ENCODE measurements at regions of chr13 and their contacts with region 1.

Region 1: DNA sequence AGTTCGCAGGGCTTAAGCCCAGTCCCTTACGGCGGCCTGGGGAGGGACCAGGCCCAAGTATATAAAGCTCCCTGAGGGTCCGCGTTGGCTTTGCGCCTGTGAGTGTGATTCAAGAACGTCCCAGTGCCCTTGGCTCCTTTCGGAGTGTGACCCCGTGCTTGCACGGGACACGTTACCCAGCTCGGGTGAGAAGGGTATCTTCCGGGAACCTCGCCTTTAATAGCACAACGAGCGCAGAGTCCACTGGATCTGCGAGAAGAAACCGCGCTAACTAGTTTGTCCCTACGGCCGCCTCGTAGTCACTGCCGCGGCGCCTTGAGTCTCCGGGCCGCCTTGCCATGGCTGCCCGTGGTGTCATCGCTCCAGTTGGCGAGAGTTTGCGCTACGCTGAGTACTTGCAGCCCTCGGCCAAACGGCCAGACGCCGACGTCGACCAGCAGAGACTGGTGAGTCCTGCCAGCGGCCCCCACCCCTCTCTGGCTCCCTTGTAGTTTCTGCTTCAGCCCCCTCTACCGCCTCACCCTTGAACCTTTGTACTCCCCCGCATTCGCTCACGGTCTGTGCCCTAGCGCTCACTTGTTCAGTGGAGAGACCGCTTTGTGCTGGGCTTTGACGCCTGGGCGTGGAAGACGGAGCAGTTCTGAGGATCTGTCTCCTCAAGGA is at the start of gene DNAJC15:
- DNase-seq: peak; percentile 35 to 88 (median 80)
- ATAC-seq: peak; percentile 91
- H3K4me3 ChIP-seq: peak within 1 kb of the TSS; percentile 72 to 93
- H3K4me3 Mint-ChIP-seq: peak within 1 kb of the TSS; percentile 96
- H3K27ac ChIP-seq: peak within 1 kb of the TSS; percentile 64 to 81
- H3K27ac Mint-ChIP-seq: peak within 1 kb of the TSS; percentile 97
- H3K4me1 ChIP-seq: peaks cover 22% of the 10 kb centered on the region
- H3K4me1 Mint-ChIP-seq: peaks cover 34% of the 10 kb centered on the region
- H3K27me3 ChIP-seq: no peaks in the 10 kb centered on the region
- H3K27me3 Mint-ChIP-seq: no peaks in the 10 kb centered on the region
- CTCF ChIP-seq: no peak
- total RNA-seq, gene DNAJC15: 4.2 to 5.9 TPM

Region 2: DNA sequence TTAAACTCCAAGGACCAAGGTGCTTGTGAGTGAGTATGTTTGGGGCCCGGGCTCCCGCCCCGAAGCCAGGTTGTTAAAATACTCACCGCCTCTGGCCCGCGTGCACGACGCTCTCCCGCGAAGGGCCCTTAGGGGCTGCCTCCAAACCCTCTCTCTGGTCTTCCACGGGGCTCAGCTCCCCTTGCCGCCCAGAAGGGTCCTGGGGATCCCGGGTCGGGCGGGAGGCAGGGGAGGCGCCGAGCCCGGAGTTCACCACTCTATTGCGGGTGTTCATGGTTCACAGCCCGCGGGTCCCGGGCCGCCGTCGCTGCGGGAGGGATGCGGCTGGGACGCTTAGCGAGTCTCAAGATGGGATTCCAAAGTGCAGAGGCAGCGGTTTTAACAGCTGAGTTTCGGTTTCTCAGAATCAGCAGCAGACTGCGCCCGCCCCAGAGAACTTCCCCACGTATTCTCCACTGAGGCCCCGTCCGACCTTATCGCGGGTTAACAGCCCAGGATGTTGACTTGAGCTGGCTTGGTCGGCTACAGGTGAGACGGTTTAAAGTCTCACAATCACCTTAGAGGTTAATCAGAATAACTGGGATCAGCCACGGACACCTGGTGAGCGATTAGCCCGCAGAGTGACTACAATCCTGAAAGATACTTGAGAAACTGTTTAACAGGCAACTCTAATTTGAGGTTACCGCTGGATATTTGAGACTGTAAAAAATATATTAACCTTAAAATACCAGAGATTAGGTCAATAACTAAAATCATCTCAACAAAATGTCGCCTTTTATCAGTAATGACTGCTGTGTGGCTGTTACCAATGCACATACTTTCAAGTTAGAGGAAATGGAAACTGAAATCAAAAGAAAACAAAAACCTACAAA is 31.3 kb before region 1 on chr13 and contains the start of gene EPSTI1:
- CTCF ChIA-PET with region 1: no interaction called
- POLR2A ChIA-PET with region 1: interaction called, 32 read pairs
- intact Hi-C with region 1: loop called (anchors 1 to 2 kb)
- DNase-seq: peak; percentile 41 to 89 (median 74)
- ATAC-seq: peak; percentile 83
- H3K4me3 ChIP-seq: peak within 1 kb of the TSS; percentile 74 to 78
- H3K4me3 Mint-ChIP-seq: peak within 1 kb of the TSS; percentile 93
- H3K27ac ChIP-seq: peak within 1 kb of the TSS; percentile 96 to 97
- H3K27ac Mint-ChIP-seq: peak within 1 kb of the TSS; percentile 99
- H3K4me1 ChIP-seq: peaks cover 27% of the 10 kb centered on the region
- H3K4me1 Mint-ChIP-seq: peaks cover 34% of the 10 kb centered on the region
- H3K27me3 ChIP-seq: no peaks in the 10 kb centered on the region
- H3K27me3 Mint-ChIP-seq: no peaks in the 10 kb centered on the region
- CTCF ChIP-seq: no peak
- total RNA-seq, gene EPSTI1: 8.8 to 9.7 TPM

Region 3: GRCh38 chr13:43041369-43041921 is 18.0 kb after region 1 on chr13:
- CTCF ChIA-PET with region 1: no interaction called
- POLR2A ChIA-PET with region 1: interaction called, 10 read pairs
- intact Hi-C with region 1: no loop called
- DNase-seq: no peak
- ATAC-seq: no peak
- H3K4me3 ChIP-seq: no peak overlapping the region
- H3K4me3 Mint-ChIP-seq: no peak overlapping the region
- H3K27ac ChIP-seq: no peak overlapping the region
- H3K27ac Mint-ChIP-seq: no peak overlapping the region
- H3K4me1 ChIP-seq: peaks cover 16% of the 10 kb centered on the region
- H3K4me1 Mint-ChIP-seq: peaks cover 58% of the 10 kb centered on the region
- H3K27me3 ChIP-seq: no peaks in the 10 kb centered on the region
- H3K27me3 Mint-ChIP-seq: no peaks in the 10 kb centered on the region
- CTCF ChIP-seq: no peak

Region 4: DNA sequence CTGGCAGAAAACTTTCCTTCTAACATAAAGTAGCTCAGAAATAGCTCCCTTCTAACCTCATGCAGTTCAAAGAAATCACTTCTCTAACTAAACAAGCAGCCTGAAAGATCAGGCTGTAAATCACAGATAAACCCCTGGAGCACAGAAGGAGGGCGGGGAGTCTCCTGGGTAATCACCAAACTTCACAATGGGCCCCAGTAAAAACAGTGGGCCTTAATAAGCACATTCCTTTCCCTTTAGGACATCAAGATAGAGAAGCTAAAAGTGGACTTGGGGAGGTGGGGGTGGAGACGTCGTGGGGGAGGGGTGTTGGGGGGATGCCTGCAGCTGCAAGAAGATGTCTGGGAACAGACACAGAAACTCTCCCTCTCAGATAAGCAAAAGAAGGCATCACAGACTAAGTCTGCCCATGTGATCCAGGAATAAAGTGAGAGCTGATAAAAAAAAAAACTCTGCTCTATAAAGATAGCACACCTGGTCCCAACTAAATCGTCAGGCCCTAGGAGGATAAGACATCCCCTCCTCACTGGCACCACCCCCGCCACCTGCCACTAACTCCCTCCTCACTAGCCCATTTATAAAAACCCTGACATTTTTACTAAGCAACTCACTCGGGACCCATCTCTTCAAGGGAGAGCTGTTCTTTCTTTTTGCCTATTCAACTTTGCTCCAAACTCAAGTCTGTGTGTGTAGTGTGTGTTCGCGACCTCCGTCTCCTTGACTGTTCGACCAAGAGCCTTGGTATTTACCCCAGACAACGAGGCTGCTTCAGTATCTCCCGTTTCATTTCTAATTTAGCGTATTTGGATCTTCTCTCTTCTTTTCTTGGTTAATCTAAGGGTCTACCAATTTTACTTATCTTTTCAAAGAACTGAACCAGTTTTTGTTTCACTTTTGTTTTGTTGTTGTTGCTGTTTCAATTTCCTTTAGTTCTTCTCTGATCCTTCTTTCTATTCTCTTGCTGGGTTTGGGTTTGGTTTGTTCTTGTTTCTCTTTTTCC is 31.7 kb after region 1 on chr13:
- CTCF ChIA-PET with region 1: no interaction called
- POLR2A ChIA-PET with region 1: interaction called, 6 read pairs
- intact Hi-C with region 1: loop called (anchors 1 to 5 kb)
- DNase-seq: peak in 5 of 9 experiments; percentile 17 to 60 (median 40)
- ATAC-seq: peak; percentile 35
- H3K4me3 ChIP-seq: peak overlapping the region; percentile 55 to 71
- H3K4me3 Mint-ChIP-seq: no peak overlapping the region
- H3K27ac ChIP-seq: peak overlapping the region; percentile 75 to 88
- H3K27ac Mint-ChIP-seq: no peak overlapping the region
- H3K4me1 ChIP-seq: peaks cover 38% of the 10 kb centered on the region
- H3K4me1 Mint-ChIP-seq: peaks cover 34% of the 10 kb centered on the region
- H3K27me3 ChIP-seq: no peaks in the 10 kb centered on the region
- H3K27me3 Mint-ChIP-seq: no peaks in the 10 kb centered on the region
- CTCF ChIP-seq: no peak

Measured in CD8-positive, alpha-beta T cell (primary cell).